ENCODE measurements at regions of chr9 and their contacts with region 1.

Region 1: GRCh38 chr9:21326526-21327139 is 8.6 kb downstream of the KLHL9 start:
- DNase-seq: peak; percentile 30
- H3K4me3 Mint-ChIP-seq: no peak overlapping the region
- H3K27ac Mint-ChIP-seq: no peak overlapping the region
- H3K4me1 Mint-ChIP-seq: peaks cover 6% of the 10 kb centered on the region
- H3K27me3 Mint-ChIP-seq: no peaks in the 10 kb centered on the region
- CTCF ChIP-seq: peak; percentile 32

Region 2: DNA sequence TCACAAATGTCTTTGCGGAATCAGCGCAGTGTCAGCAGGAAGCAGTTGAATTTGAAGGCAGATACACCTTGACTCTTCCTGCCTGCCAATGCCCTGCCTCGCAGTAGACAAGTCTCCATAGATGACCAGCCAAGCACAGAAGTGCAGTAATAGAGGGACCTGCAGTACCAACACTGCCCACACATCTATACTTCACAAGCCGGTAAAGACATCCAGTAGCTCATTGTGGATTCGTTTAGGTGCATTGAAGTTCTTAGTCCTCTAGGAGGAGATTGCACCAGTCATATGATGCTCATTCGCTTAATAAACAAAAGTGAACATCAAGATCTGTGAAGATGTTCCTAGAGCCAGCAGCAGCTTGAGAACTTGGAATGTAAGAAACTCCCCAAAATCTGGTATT is 65.6 kb after region 1 on chr9:
- CTCF ChIA-PET with region 1: no interaction called
- POLR2A ChIA-PET with region 1: no interaction called
- intact Hi-C with region 1: loop called (anchors 5 kb)
- DNase-seq: peak; percentile 11
- H3K4me3 Mint-ChIP-seq: no peak overlapping the region
- H3K27ac Mint-ChIP-seq: no peak overlapping the region
- H3K4me1 Mint-ChIP-seq: peaks cover 10% of the 10 kb centered on the region
- H3K27me3 Mint-ChIP-seq: peaks cover 90% of the 10 kb centered on the region
- CTCF ChIP-seq: peak; percentile 5

Region 3: GRCh38 chr9:21455320-21455719 is 128.7 kb after region 1 on chr9:
- CTCF ChIA-PET with region 1: interaction called, 6 read pairs
- POLR2A ChIA-PET with region 1: no interaction called
- intact Hi-C with region 1: loop called (anchors 10 kb)
- DNase-seq: peak; percentile 28
- H3K4me3 Mint-ChIP-seq: no peak overlapping the region
- H3K27ac Mint-ChIP-seq: no peak overlapping the region
- H3K4me1 Mint-ChIP-seq: no peaks in the 10 kb centered on the region
- H3K27me3 Mint-ChIP-seq: no peaks in the 10 kb centered on the region
- CTCF ChIP-seq: peak; percentile 33

Region 4: GRCh38 chr9:22452415-22453010 is 1125.9 kb after region 1 on chr9:
- CTCF ChIA-PET with region 1: no interaction called
- POLR2A ChIA-PET with region 1: no interaction called
- intact Hi-C with region 1: loop called (anchors 10 kb)
- DNase-seq: peak; percentile 33
- H3K4me3 Mint-ChIP-seq: no peak overlapping the region
- H3K27ac Mint-ChIP-seq: no peak overlapping the region
- H3K4me1 Mint-ChIP-seq: no peaks in the 10 kb centered on the region
- H3K27me3 Mint-ChIP-seq: no peaks in the 10 kb centered on the region
- CTCF ChIP-seq: peak; percentile 39

Measured in MCF 10A (cell line).